Dendritic cell treated with granulocyte-macrophage colony-stimulating factor and Interleukin-4, amounts not matched to agents 40 ng/mL and 50 ng/mL, for 4 days (primary cell): ENCODE measurements at regions of chr12 and their contacts with region 1.

Region 1: DNA sequence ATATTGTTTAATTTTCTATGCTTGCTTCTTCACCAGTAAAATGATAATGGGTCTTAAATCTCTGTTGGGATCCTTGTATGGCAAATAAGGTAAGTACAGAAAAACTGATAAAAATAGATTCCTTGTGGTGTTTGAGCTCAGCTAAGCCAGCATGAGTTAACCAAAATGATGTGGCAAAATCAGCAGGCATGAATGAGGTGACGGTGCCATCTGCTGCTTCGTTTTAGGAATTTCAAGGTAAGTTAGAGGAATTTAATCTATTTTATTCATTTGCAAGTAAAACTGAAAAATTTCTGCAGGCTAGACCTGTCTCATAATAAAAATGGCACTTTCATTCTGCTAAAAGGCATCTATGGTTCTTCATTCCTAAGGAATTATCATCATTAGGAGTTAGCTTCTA is 10.0 kb upstream of the CLEC7A start:
- H3K4me3 Mint-ChIP-seq: no peak overlapping the region
- H3K27ac Mint-ChIP-seq: no peak overlapping the region
- H3K4me1 Mint-ChIP-seq: peaks cover 22% of the 10 kb centered on the region
- H3K27me3 Mint-ChIP-seq: no peaks in the 10 kb centered on the region

Region 2: DNA sequence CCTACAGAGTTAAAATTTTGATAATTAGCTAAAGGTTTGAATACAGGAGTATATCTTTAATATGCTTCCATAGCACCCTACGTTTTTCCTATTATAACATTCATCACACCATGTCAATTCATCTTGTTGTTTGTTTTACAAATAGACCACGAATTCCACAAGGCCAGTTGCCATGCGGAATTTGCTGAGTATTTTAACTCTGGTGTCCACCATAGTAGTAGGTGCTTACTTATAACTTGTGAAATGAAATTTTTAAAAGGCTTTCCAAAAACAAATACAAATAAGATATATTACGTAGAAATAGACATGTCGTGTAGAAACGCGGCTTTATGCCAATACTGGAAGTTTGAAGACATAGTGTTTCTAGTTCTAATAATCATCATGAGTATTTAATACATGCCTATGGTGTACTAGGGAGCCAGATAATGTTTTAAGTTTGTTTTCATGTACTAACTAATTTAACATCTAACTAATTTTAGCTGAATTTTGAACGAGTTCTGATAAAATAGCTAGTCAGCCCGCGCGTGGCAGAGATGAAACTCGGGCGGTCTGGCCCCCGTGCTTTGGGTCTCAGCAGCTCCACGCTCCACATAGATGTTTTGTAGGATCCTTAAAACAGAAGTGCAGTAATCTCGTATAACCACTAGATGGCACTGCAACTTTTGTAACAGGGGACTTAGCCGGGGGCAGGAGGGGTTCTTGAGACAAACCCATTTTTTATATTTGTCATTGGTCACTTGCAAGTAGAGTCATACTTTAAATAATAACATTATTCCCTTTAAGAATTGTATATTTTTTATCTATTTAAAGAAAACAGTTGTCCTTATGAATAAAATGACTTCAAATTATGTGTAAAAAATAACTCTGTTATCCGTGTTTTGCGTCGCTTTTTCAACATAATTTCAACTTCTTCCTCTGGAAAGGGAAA is 389.5 kb before region 1 on chr12:
- intact Hi-C with region 1: loop called (anchors 5 kb)
- H3K4me3 Mint-ChIP-seq: no peak overlapping the region
- H3K27ac Mint-ChIP-seq: no peak overlapping the region
- H3K4me1 Mint-ChIP-seq: peaks cover 16% of the 10 kb centered on the region
- H3K27me3 Mint-ChIP-seq: no peaks in the 10 kb centered on the region

Region 3: GRCh38 chr12:9808504-9808903 is 331.5 kb before region 1 on chr12:
- intact Hi-C with region 1: loop called (anchors 5 kb)
- H3K4me3 Mint-ChIP-seq: no peak overlapping the region
- H3K27ac Mint-ChIP-seq: no peak overlapping the region
- H3K4me1 Mint-ChIP-seq: peaks cover 21% of the 10 kb centered on the region
- H3K27me3 Mint-ChIP-seq: no peaks in the 10 kb centered on the region

Region 4: GRCh38 chr12:9925708-9926393 is 214.2 kb before region 1 on chr12:
- intact Hi-C with region 1: loop called (anchors 5 kb)
- H3K4me3 Mint-ChIP-seq: peak overlapping the region; percentile 63
- H3K27ac Mint-ChIP-seq: peak overlapping the region; percentile 60
- H3K4me1 Mint-ChIP-seq: peaks cover 18% of the 10 kb centered on the region
- H3K27me3 Mint-ChIP-seq: no peaks in the 10 kb centered on the region

Region 5: GRCh38 chr12:9940375-9940774 is 199.6 kb before region 1 on chr12:
- intact Hi-C with region 1: loop called (anchors 2 kb)
- H3K4me3 Mint-ChIP-seq: no peak overlapping the region
- H3K27ac Mint-ChIP-seq: no peak overlapping the region
- H3K4me1 Mint-ChIP-seq: peaks cover 22% of the 10 kb centered on the region
- H3K27me3 Mint-ChIP-seq: no peaks in the 10 kb centered on the region

Region 6: GRCh38 chr12:10033783-10034545 is 106.0 kb before region 1 on chr12:
- intact Hi-C with region 1: loop called (anchors 1 kb)
- H3K4me3 Mint-ChIP-seq: no peak overlapping the region
- H3K27ac Mint-ChIP-seq: peak overlapping the region; percentile 62
- H3K4me1 Mint-ChIP-seq: peaks cover 48% of the 10 kb centered on the region
- H3K27me3 Mint-ChIP-seq: no peaks in the 10 kb centered on the region

Region 7: GRCh38 chr12:10320643-10321042 is 180.6 kb after region 1 on chr12:
- intact Hi-C with region 1: no loop called
- H3K4me3 Mint-ChIP-seq: no peak overlapping the region
- H3K27ac Mint-ChIP-seq: no peak overlapping the region
- H3K4me1 Mint-ChIP-seq: peaks cover 5% of the 10 kb centered on the region
- H3K27me3 Mint-ChIP-seq: peaks cover 3% of the 10 kb centered on the region